ENCODE measurements at regions of chr11 and their contacts with region 1.

Region 1: GRCh38 chr11:47248664-47249377 is at the start of gene ACP2:
- DNase-seq: peak; percentile 97
- ATAC-seq: peak; percentile 96
- total RNA-seq, gene ACP2: 21.2 TPM

Region 2: DNA sequence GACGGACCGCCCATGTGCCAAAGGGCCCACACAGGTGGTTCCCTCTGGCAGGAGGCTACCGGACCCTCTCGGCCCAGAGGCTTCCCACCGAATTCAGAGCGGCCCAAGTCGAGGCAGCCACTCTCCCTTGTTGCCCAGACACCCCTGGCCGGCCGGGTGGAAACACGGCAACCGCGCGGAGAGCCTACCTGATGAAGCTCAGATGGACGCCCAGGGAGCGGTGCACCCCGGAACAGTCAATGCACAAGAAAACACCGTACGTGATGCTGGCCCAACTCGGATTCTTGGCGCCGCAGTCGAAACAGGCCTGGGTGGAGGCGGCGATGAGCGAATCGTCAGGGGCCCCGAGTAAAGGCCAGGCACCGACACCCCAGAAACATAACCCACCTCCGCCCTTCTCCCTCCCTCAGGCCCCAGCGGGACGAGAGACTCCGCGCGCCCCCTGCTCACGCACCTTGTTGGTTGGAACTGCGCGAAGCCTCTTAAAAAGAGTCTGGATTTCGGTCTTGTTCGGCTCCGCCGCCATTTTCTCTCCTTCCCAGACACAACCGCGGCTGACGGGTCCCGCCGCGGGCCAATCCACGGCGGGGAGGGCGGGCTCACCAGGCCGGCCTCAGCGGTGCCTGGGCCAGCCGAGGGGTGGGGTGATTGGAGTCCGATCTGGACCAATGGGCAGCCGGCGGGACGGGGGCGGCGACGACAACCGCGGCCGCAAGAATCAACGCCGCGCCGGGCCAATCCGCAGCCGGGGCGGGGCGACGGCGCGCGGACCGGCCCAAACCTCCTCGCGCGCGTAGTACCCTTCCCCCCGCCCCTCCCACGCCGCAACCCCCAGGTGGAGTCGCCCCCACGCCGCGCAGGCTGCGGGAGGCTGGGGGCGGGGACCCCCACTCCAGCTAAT is 72.2 kb before region 1 on chr11 and contains the start of gene ARFGAP2:
- intact Hi-C with region 1: loop called (anchors 5 kb)
- DNase-seq: peak; percentile 99
- ATAC-seq: peak; percentile 94
- total RNA-seq, gene ARFGAP2: 45.8 TPM

Region 3: GRCh38 chr11:47186076-47186936 is 62.5 kb before region 1 on chr11 and contains the start of gene PACSIN3:
- intact Hi-C with region 1: loop called (anchors 2 kb)
- DNase-seq: peak; percentile 81
- ATAC-seq: peak; percentile 56
- total RNA-seq, gene PACSIN3: 177 TPM

Measured in Right ventricle myocardium inferior (tissue), 1 donor.